Activated B cell treated with CpG ODN at 0.5 μM for 24 hours (primary cell): ENCODE measurements at regions of chr6 and their contacts with region 1.

Region 1: GRCh38 chr6:14734416-14735340 is 511.2 kb upstream of the JARID2 start:
- DNase-seq: no peak
- ATAC-seq: peak; percentile 81
- H3K4me3 Mint-ChIP-seq: peak overlapping the region; percentile 71
- H3K27ac Mint-ChIP-seq: peak overlapping the region; percentile 76
- H3K4me1 Mint-ChIP-seq: peaks cover 99% of the 10 kb centered on the region
- H3K27me3 Mint-ChIP-seq: no peaks in the 10 kb centered on the region
- CTCF ChIP-seq: no peak

Region 2: GRCh38 chr6:13526727-13527670 is 1207.7 kb before region 1 on chr6:
- CTCF ChIA-PET with region 1: no interaction called
- POLR2A ChIA-PET with region 1: no interaction called
- intact Hi-C with region 1: no loop called
- DNase-seq: peak; percentile 41
- ATAC-seq: peak; percentile 90
- H3K4me3 Mint-ChIP-seq: peak overlapping the region; percentile 3
- H3K27ac Mint-ChIP-seq: peak overlapping the region; percentile 78
- H3K4me1 Mint-ChIP-seq: peaks cover 47% of the 10 kb centered on the region
- H3K27me3 Mint-ChIP-seq: no peaks in the 10 kb centered on the region
- CTCF ChIP-seq: no peak

Region 3: DNA sequence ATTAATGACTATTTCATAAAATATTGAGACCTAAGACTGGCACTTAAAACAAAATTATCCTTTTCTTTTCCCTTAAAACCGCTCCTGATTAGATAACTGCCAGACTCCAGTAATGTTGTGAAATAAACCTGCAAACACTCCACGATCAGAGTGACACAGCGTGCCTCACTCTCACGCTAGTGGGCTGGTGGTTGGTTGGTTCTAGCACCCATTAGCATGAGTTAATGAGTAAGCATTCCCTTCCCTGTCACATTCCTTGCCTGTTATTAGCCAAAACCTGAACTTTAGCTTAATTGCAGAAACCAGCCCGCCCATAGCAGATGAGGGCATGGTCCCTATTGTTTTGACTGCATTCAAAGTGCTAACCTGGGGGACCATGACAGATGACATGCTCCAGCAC is 423.7 kb before region 1 on chr6:
- CTCF ChIA-PET with region 1: no interaction called
- POLR2A ChIA-PET with region 1: no interaction called
- intact Hi-C with region 1: loop called (anchors 2 kb)
- DNase-seq: no peak
- ATAC-seq: no peak
- H3K4me3 Mint-ChIP-seq: no peak overlapping the region
- H3K27ac Mint-ChIP-seq: peak overlapping the region; percentile 87
- H3K4me1 Mint-ChIP-seq: peaks cover 84% of the 10 kb centered on the region
- H3K27me3 Mint-ChIP-seq: no peaks in the 10 kb centered on the region
- CTCF ChIP-seq: no peak

Region 4: GRCh38 chr6:14476793-14477531 is 257.7 kb before region 1 on chr6:
- CTCF ChIA-PET with region 1: no interaction called
- POLR2A ChIA-PET with region 1: no interaction called
- intact Hi-C with region 1: no loop called
- DNase-seq: no peak
- ATAC-seq: no peak
- H3K4me3 Mint-ChIP-seq: no peak overlapping the region
- H3K27ac Mint-ChIP-seq: no peak overlapping the region
- H3K4me1 Mint-ChIP-seq: peaks cover 19% of the 10 kb centered on the region
- H3K27me3 Mint-ChIP-seq: no peaks in the 10 kb centered on the region
- CTCF ChIP-seq: no peak

Region 5: DNA sequence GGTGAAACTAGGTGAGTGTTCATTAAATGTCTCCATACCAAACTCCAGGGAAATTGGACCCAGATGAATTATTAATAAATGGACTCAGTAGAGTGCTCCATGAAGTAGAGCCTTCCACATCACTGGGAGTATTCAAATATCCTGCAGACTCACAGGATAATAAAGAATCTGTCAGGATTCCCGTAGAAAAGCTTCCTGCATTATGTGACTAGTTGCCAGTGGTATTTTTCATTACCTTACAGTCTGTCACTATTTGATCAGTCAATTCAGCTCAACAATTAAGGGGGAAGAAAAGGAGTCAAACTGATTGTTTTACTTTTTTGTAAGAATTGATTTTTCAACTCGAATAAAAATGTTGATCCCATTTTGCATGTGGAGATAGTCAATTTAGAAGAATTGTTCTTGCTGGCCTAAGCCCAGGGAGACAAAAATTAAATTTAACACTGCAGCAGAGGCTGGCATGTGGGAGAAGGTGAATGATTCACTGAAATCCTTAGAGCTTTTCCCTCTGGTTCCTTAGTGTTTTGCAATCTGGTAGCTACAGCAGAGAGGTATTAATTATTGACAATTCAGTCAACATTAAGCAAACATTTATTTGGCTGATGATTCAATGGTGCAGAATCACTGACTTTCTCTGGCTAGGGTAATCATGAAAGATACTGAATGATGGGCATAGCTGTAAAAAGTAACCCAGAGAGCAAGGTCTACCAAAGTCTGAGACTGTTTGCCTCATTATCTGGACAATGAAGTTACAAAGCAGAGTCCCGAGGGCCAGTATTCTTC is 174.7 kb before region 1 on chr6:
- CTCF ChIA-PET with region 1: no interaction called
- POLR2A ChIA-PET with region 1: no interaction called
- intact Hi-C with region 1: no loop called
- DNase-seq: no peak
- ATAC-seq: no peak
- H3K4me3 Mint-ChIP-seq: no peak overlapping the region
- H3K27ac Mint-ChIP-seq: no peak overlapping the region
- H3K4me1 Mint-ChIP-seq: peaks cover 8% of the 10 kb centered on the region
- H3K27me3 Mint-ChIP-seq: no peaks in the 10 kb centered on the region
- CTCF ChIP-seq: no peak

Region 6: GRCh38 chr6:14660806-14661579 is 73.7 kb before region 1 on chr6:
- CTCF ChIA-PET with region 1: no interaction called
- POLR2A ChIA-PET with region 1: interaction called, 7 read pairs
- intact Hi-C with region 1: loop called (anchors 1 kb)
- DNase-seq: peak; percentile 38
- ATAC-seq: peak; percentile 75
- H3K4me3 Mint-ChIP-seq: no peak overlapping the region
- H3K27ac Mint-ChIP-seq: no peak overlapping the region
- H3K4me1 Mint-ChIP-seq: peaks cover 24% of the 10 kb centered on the region
- H3K27me3 Mint-ChIP-seq: no peaks in the 10 kb centered on the region
- CTCF ChIP-seq: no peak

Region 7: DNA sequence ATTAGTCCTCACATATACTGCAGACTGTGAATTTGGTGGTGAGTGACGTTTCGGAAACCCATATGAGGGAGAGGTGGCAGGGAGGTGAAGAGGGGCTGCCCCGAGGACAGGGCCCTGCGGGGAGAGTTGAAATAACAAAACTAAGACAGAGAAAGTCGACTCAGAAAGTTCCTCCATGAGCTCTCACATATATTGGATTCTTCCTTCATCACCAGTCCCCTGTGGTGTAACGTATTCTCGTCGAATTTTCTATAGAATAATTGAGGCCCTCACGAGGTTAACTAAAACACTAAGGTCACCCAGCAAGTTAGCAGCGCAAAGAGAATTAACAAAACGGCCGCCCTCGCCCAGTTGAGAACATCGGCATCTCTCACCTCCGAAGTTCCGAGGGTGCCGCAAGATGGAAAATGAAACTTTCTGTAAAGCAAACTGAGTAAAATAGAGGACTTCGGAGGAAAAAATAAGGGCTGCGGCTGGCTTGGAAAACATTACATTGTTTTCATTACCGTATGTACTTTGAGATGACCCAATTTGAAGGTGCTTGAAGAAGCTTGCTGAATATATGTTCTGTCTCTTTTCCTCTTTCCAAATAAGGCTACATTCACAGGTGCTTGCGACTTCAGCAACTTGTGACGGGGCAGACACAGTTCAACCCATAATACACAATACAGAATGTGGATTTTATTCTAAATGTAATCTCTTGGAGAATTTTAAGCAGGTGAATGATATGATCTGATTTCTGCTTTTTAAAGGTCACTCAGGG is 20.3 kb after region 1 on chr6:
- CTCF ChIA-PET with region 1: no interaction called
- POLR2A ChIA-PET with region 1: no interaction called
- intact Hi-C with region 1: loop called (anchors 1 kb)
- DNase-seq: no peak
- ATAC-seq: peak; percentile 64
- H3K4me3 Mint-ChIP-seq: peak overlapping the region; percentile 73
- H3K27ac Mint-ChIP-seq: peak overlapping the region; percentile 55
- H3K4me1 Mint-ChIP-seq: peaks cover 4% of the 10 kb centered on the region
- H3K27me3 Mint-ChIP-seq: no peaks in the 10 kb centered on the region
- CTCF ChIP-seq: no peak

Region 8: DNA sequence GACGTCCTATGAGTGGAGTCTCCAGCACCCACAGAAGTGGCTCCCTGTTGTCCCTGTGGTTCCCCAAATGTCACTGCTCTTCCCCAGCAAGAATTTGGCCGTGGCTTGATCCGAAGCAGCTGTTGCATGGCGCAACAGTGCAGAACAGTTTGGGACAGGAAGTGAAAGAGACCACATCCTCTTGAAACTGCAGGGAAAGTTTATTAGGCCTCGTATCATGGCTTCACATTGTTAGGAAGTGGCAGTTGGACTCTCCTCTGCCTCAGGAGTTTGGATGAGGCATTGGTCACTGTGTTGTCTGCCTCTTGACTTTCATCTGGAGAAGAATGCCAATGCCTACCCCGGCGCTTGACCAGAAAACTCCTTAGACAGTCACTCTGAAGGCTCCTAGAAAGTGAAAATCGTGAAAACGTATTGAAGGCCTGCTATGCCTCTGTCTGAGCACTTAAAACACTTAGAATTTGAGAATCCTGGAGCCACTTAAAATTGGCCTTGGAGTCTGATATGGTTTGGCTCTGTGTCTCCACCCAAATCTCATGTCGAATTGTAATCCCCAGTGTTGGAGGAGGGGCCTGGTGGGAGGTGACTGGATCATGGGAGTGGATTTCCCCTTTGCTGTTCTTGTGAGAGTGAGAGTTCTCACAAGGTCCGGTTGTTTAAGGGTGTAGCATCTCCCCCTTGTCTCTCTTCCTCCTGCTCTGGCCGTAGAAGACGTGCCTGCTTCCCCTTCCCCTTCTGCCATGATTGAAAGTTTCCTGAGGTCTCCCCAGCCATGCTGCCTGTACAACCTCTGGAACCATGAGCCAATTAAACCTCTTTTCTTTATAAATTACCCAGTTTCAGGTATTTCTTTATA is 176.2 kb after region 1 on chr6:
- CTCF ChIA-PET with region 1: no interaction called
- POLR2A ChIA-PET with region 1: no interaction called
- intact Hi-C with region 1: loop called (anchors 2 kb)
- DNase-seq: peak; percentile 34
- ATAC-seq: peak; percentile 92
- H3K4me3 Mint-ChIP-seq: peak overlapping the region; percentile 70
- H3K27ac Mint-ChIP-seq: peak overlapping the region; percentile 88
- H3K4me1 Mint-ChIP-seq: peaks cover 41% of the 10 kb centered on the region
- H3K27me3 Mint-ChIP-seq: no peaks in the 10 kb centered on the region
- CTCF ChIP-seq: no peak

Region 9: GRCh38 chr6:14975471-14975817 is 240.8 kb after region 1 on chr6:
- CTCF ChIA-PET with region 1: no interaction called
- POLR2A ChIA-PET with region 1: no interaction called
- intact Hi-C with region 1: no loop called
- DNase-seq: no peak
- ATAC-seq: no peak
- H3K4me3 Mint-ChIP-seq: no peak overlapping the region
- H3K27ac Mint-ChIP-seq: no peak overlapping the region
- H3K4me1 Mint-ChIP-seq: peaks cover 8% of the 10 kb centered on the region
- H3K27me3 Mint-ChIP-seq: no peaks in the 10 kb centered on the region
- CTCF ChIP-seq: no peak